GM18951 (cell line): ENCODE measurements at regions of chr5 and their contacts with region 1.

Region 1: GRCh38 chr5:102754767-102755431 is at the start of gene PAM:
- POLR2A ChIP-seq: peak; percentile 71

Region 2: GRCh38 chr5:102959055-102959454 is 204.2 kb after region 1 on chr5:
- in situ Hi-C with region 1: no loop called
- POLR2A ChIP-seq: no peak

Region 3: GRCh38 chr5:103139264-103139865 is 384.5 kb after region 1 on chr5:
- in situ Hi-C with region 1: loop called (anchors 25 kb)
- POLR2A ChIP-seq: no peak